Right cardiac atrium (tissue), 5 donors: ENCODE measurements at regions of chr5 and their contacts with region 1.

Region 1: GRCh38 chr5:150656191-150657132 is 4.6 kb upstream of the MYOZ3 start:
- DNase-seq: peak; percentile 82 to 93 (median 92)
- ATAC-seq: peak; percentile 50 to 60
- H3K4me3 ChIP-seq: peak overlapping the region; percentile 40
- H3K27ac ChIP-seq: peak overlapping the region; percentile 83
- H3K4me1 ChIP-seq: peaks cover 25% of the 10 kb centered on the region
- H3K27me3 ChIP-seq: no peaks in the 10 kb centered on the region

Region 2: GRCh38 chr5:150589871-150590601 is 66.4 kb before region 1 on chr5:
- intact Hi-C with region 1: loop called (anchors 5 to 10 kb)
- DNase-seq: peak; percentile 82 to 93 (median 92)
- ATAC-seq: peak; percentile 77 to 80
- H3K4me3 ChIP-seq: no peak overlapping the region
- H3K27ac ChIP-seq: peak overlapping the region; percentile 69
- H3K4me1 ChIP-seq: peaks cover 31% of the 10 kb centered on the region
- H3K27me3 ChIP-seq: no peaks in the 10 kb centered on the region